Mammary epithelial cell (primary cell): ENCODE measurements at regions of chr14 and their contacts with region 1.

Region 1: GRCh38 chr14:104624939-104625338 is 20.4 kb upstream of the TMEM179 start:
- DNase-seq: no peak
- H3K4me3 ChIP-seq: no peak overlapping the region
- H3K27ac ChIP-seq: no peak overlapping the region
- H3K4me1 ChIP-seq: no peaks in the 10 kb centered on the region
- H3K27me3 ChIP-seq: no peaks in the 10 kb centered on the region
- CTCF ChIP-seq: no peak

Region 2: DNA sequence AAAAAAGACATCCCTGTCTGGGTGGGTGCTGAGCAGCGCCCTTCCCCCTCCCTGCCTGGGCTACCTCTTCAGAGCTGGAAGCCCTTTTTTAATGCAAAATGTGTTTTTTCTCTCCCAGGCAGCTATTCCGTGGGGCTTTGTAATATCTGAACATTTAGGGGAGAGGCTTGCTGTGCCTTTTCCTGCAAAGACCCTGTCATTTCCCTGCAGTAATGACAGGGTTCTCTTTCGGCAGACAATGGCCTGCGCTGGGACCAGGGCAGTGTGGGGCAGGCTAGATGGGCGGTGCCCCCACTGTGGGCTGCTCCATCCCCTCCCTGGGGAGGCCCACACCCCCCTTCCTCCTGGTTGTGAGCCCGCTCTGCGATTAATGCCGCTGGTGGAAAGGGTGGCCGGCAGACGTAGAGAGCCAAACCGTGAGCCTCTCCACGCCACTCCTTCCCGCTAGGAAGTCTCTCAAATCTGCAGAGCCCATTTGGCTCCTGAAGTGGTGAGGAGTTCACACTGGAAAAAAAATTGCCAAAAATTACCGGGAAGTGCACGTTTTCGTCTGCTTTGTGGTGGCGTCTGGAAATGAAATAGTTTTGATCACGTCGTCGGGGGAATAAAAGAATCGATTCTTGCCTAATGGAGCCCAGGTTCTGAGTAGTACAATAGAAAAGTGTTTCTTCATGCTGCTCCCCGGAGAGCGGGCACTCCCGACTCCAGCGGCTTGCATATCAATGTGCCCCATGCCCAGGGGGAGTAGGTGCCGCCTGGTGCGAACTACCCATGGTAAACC is 455.1 kb before region 1 on chr14:
- CTCF ChIA-PET with region 1: no interaction called
- dilution Hi-C with region 1: loop called (anchors 10 kb)
- in situ Hi-C with region 1: no loop called
- intact Hi-C with region 1: no loop called
- DNase-seq: no peak
- H3K4me3 ChIP-seq: no peak overlapping the region
- H3K27ac ChIP-seq: no peak overlapping the region
- H3K4me1 ChIP-seq: peaks cover 5% of the 10 kb centered on the region
- H3K27me3 ChIP-seq: no peaks in the 10 kb centered on the region
- CTCF ChIP-seq: no peak

Region 3: DNA sequence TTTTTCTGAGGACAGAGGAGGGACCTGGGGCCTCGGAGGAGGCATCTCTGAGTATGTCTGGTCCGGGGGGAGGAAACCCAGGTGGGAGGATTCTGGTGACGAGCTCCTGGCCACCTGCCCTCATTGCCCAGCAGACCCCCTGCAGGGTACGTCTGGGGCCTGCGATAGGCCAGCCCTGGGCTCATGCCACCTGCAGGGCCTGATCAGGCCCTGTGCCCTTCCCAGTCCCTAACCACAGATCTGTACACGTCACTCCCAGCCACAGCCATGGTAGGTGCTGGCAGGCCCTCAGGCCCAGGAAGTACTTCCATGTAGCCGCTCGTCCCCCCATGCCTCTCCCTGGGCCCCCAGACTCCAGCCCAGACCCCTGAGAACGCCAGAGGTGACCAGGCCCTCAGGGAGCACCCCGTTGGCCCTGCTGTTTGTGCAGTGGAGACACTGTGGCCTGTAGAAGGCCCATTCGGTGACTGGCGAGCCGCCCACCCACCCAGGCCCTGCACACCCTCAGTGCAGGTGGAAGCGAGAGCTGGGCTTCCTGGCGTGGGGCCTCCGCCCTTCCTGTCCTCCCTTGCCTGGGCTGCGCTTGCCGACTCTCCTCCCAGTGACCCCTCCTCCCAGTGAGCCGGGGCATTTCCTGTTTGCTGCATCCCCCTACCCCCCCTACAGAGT is 70.2 kb after region 1 on chr14:
- CTCF ChIA-PET with region 1: no interaction called
- dilution Hi-C with region 1: no loop called
- in situ Hi-C with region 1: no loop called
- intact Hi-C with region 1: no loop called
- DNase-seq: peak; percentile 83
- H3K4me3 ChIP-seq: no peak overlapping the region
- H3K27ac ChIP-seq: peak overlapping the region; percentile 50
- H3K4me1 ChIP-seq: peaks cover 82% of the 10 kb centered on the region
- H3K27me3 ChIP-seq: no peaks in the 10 kb centered on the region
- CTCF ChIP-seq: no peak